Left ventricle myocardium superior (tissue), 1 donor: ENCODE measurements at regions of chr2 and their contacts with region 1.

Region 1: DNA sequence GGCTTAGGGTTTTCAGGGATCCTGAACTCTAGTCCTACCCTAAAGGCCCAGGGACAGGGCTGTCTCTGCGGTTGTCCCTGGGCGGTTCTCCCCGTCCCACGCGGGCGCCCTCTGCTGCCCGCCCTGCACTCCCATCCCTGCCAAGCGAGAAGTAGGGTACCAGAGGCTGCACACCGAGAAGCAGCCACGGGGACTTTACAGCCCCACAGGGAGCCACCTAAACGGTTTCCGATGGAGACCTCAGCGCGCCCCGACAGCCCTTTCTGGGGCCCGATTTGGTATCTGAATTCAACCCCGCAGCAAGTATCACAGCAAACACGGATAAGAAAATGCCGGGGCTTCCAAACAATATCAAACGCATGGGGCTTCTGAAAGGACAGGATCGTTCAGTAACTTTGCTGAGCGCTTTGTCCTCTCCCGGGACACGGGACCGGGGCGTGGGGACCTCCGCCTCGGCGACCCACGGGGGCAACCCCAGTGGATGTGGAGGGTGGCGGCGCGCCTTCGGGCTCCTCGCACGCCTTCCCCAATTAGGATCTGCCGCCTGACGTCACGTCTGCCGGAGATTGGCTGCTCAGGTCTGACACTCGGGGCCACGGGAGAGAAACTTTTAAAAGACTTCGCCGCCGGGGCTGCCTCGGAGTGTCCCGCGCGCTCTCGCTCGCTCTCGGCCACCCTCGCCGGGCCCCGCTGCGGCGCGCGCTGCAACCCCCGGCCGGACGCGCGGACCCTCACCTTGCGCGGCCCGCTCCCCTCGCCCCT is at the start of gene LTBP1:
- DNase-seq: peak; percentile 88
- ATAC-seq: peak; percentile 88
- total RNA-seq, gene LTBP1: 72.5 TPM

Region 2: DNA sequence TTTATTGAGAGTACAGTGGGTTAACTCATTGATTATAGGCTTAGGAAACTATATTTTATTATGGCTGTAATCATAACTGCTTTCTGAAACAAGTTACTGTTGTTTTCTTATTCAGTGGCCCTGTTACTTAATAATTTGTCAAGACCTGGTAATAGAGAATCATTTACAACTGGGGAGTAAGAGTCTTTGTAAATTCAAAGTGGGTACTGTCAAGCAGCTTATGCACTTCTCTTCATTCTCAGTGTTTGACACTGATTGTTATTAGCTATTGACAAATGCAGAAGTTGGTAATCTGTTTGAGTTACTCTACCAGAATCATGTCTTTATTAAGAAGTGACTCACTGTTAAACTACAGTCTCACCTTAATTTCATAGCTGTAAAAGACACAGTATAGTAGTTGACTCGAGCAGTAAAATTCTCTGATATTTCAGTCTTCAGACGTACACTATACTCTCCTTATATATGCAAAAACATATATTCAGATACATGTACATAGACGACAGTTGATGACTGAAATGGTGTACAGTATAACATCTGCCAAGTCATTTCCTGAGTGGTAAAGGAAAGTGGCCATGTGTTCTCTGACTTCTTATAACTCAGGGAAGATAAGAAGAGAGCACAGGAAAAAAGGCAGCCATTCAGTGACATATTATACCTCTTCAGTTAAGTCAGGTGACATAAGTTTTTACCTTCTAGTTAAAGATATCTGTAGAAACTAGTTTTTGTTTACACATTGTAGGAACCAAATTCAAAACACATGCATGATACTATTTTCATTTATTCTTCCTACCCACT is 354.6 kb before region 1 on chr2:
- intact Hi-C with region 1: no loop called
- DNase-seq: no peak
- ATAC-seq: peak; percentile 38

Region 3: GRCh38 chr2:32772638-32773447 is 173.7 kb before region 1 on chr2:
- intact Hi-C with region 1: loop called (anchors 5 kb)
- DNase-seq: no peak
- ATAC-seq: peak; percentile 75

Region 4: DNA sequence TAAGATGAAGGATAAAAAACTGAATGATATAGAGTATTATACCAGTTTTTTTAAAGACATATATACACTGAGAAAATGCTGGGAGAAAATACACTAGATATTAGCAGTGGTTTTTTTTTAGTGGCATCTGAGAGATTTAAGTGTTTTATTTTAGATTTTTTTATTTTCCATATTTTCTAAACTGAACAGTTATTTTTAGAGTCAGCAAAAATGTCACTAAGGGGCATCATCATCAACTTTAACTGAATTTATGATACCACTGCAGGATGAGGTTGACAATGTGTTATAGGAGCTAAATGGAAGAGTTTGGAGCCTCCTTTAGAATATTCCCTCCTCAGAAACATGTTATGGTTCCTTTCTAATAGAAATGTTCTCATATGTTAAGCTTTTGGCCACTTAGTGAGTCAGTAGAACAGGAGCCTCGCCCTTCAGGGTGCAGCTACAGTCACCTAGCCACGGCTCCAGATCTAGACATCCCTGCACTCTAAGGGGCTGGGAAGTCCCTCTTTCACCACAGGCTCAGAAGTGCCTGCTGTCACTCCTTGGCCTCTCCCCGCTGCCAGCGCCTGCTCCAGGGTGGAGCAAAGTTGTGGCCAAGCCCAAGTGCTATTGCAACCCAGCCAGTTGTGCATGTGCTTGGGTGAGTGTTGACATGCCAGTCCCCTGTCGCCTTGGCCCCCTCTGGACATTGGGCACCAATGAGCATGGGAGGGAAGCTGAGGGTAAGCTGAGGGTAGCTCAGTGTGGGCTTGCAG is 319.3 kb after region 1 on chr2:
- intact Hi-C with region 1: no loop called
- DNase-seq: no peak
- ATAC-seq: peak; percentile 17